Naive thymus-derived CD4-positive, alpha-beta T cell (primary cell): ENCODE measurements at regions of chr6 and their contacts with region 1.

Region 1: DNA sequence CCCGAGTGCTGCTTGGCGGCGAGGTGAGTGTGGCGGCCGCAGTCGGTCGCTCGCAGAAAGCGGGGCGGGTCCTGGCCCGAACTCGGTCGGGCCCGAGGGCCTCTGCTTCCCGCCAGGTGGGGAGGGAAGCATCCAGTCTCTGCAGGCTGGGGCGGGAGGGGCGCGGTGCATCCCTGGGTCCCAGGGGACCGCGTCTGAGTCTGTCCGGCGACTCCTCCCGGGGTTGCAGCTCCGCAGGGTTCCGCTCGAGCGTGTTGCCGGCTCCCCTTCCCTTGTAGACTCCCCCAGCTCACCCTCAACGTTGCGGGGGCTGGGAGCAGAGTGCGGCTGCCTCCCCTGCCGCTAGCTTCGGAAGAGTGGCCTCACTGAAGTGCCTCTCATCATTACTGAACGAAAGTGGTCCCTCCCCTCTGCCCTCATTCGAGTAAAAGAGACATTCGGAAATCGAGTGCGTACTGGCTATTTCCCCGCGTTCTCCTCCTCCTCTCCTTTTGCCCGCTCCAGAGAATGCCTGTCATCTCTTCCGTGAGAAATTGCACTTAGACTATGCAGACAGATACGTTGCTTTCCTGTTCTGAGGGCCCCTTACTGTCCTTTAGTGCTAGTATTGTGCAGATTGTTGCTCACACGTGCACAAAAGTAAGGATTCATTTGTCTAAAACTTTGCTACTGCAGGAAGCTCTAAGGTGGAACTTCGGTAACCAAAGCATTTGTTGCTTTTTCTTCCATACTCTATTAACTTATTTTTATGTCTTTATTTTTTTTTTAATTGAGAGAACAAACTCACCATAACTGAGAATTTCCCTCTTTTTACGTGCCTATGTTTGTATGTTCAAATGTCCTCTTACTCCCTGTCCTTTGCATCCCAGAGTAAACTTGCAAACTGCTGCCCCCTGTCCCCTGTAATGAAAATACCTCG is 751 bp downstream of the MAP3K4 start:
- DNase-seq: peak in 7 of 9 donors; percentile 17 to 65 (median 47)
- ATAC-seq: peak; percentile 63
- H3K4me3 ChIP-seq: peak overlapping the region; percentile 94
- H3K4me3 Mint-ChIP-seq: peak overlapping the region; percentile 90 to 99 (median 93)
- H3K27ac ChIP-seq: peak overlapping the region; percentile 76
- H3K27ac Mint-ChIP-seq: peak overlapping the region; percentile 83 to 97 (median 93)
- H3K4me1 ChIP-seq: peaks cover 9 to 14% of the 10 kb centered on the region in 2 donors
- H3K4me1 Mint-ChIP-seq: peaks cover 19 to 60% (median 45%) of the 10 kb centered on the region in 7 donors
- H3K27me3 ChIP-seq: no peaks in the 10 kb centered on the region
- H3K27me3 Mint-ChIP-seq: peaks cover 0 to 30% (median 0%) of the 10 kb centered on the region in 5 donors

Region 2: DNA sequence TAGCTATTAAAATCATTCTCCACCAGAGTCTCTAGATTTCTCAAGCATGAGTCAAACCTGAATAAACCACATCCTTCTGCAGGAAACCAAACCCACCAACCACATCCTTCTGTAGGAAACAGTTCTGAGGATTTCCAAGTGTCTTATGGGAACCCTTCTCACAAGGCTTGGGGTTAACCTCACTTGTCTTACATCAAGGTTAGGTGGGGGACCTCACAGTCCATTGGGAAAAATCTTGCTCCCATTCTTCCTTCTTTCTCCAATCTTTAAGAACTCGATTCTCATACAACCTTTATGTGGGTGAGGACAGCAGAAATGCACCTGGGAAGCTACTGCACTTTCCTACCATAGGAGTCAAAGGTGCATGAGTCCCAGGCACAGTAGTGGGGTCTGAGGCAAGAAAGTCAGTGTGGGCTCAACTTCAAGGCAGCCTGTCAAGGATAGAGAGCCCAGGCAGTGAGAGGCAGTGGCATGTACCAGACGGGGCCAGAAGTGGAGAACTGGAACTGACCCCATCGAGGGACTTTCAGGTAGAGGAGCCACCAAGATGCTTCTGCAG is 529.7 kb before region 1 on chr6:
- CTCF ChIA-PET with region 1: no interaction called
- POLR2A ChIA-PET with region 1: no interaction called
- intact Hi-C with region 1: loop called in 1 of 2 experiments (anchors 5 kb)
- DNase-seq: peak in 8 of 9 donors; percentile 69 to 93 (median 90)
- ATAC-seq: peak; percentile 95
- H3K4me3 ChIP-seq: peak overlapping the region; percentile 47
- H3K4me3 Mint-ChIP-seq: peak overlapping the region; percentile 60 to 89 (median 72)
- H3K27ac ChIP-seq: no peak overlapping the region
- H3K27ac Mint-ChIP-seq: peak overlapping the region; percentile 53 to 98 (median 88)
- H3K4me1 ChIP-seq: peaks cover 50 to 56% of the 10 kb centered on the region in 2 donors
- H3K4me1 Mint-ChIP-seq: peaks cover 33 to 81% (median 71%) of the 10 kb centered on the region in 7 donors
- H3K27me3 ChIP-seq: no peaks in the 10 kb centered on the region
- H3K27me3 Mint-ChIP-seq: peaks cover 0 to 52% (median 10%) of the 10 kb centered on the region in 5 donors

Region 3: DNA sequence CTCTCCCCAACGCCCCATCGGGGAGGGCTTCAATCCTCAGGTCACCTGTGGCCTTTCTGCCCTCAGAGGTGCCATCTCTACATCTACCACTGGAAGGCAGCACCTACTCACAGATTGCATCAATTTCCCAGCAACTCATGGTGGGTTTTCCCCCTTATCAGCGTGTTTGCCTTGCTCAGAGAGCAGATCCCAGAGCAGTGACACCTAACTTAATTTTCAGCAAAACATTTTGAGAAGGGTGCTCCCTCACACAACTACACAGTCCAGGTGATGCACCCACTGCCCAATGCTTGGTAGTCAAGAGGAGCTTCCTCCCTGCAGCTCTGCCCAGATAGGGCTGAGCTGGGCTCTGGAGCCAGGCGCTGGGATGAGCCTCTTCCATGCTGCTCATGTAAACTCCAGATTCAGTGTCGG is 242.0 kb before region 1 on chr6:
- CTCF ChIA-PET with region 1: no interaction called
- POLR2A ChIA-PET with region 1: no interaction called
- intact Hi-C with region 1: no loop called
- DNase-seq: no peak
- ATAC-seq: no peak
- H3K4me3 ChIP-seq: no peak overlapping the region
- H3K4me3 Mint-ChIP-seq: no peak overlapping the region
- H3K27ac ChIP-seq: no peak overlapping the region
- H3K27ac Mint-ChIP-seq: no peak overlapping the region
- H3K4me1 ChIP-seq: no peaks in the 10 kb centered on the region
- H3K4me1 Mint-ChIP-seq: no peaks in the 10 kb centered on the region
- H3K27me3 ChIP-seq: no peaks in the 10 kb centered on the region
- H3K27me3 Mint-ChIP-seq: peaks cover 3 to 29% (median 13%) of the 10 kb centered on the region in 5 donors

Region 4: DNA sequence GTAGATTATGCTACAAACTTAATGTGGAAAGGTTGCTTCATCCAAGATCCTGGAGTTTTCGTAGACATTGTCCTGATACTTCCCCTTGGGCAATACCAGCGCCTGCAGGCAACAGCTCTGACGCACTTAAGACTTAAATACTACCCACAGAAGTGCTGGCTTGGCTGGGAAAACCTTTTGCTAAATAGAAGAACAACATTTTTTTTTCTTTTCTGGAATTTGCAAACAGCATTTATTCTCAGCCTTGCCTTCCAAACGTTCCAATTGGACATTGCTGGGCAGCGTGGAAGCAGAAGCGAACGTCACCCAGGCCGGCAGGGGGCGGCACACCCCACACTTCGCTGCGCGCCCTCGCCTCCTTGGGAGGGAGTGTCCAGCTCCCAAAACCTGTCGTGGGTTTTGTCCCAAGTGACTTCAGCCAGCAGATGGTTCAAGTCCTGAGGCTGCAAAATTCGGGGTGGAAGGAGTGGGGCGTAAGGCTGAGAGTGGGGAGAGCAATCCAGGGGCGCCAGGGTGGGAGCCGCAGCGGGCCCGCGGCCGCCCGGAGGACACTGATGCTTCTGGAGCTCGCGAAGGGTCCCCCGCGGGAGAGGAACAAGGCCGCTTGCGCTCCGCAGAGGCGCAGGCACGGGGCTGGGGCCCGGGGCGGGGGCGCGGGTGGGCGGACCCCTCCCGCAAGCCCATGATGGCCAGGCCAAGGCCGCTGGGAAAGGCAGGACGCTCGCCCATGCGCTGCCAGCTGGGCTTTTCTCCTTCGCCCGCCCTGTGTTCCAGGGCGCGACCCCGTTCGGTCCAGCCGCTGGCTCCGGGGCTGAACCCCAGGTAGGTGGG is 61.6 kb before region 1 on chr6:
- CTCF ChIA-PET with region 1: interaction called, 4 read pairs
- POLR2A ChIA-PET with region 1: no interaction called
- intact Hi-C with region 1: loop called (anchors 1 kb)
- DNase-seq: peak in 8 of 9 donors; percentile 3 to 69 (median 40)
- ATAC-seq: peak; percentile 72
- H3K4me3 ChIP-seq: no peak overlapping the region
- H3K4me3 Mint-ChIP-seq: peak overlapping the region in 7 of 10 donors; percentile 16 to 62 (median 30)
- H3K27ac ChIP-seq: no peak overlapping the region
- H3K27ac Mint-ChIP-seq: no peak overlapping the region
- H3K4me1 ChIP-seq: no peaks in the 10 kb centered on the region
- H3K4me1 Mint-ChIP-seq: peaks cover 0 to 5% (median 0%) of the 10 kb centered on the region in 7 donors
- H3K27me3 ChIP-seq: peaks cover 0 to 5% of the 10 kb centered on the region in 2 donors
- H3K27me3 Mint-ChIP-seq: peaks cover 32 to 50% (median 47%) of the 10 kb centered on the region in 5 donors

Region 5: GRCh38 chr6:161079566-161080262 is 87.4 kb after region 1 on chr6:
- CTCF ChIA-PET with region 1: no interaction called
- POLR2A ChIA-PET with region 1: no interaction called
- intact Hi-C with region 1: loop called in 1 of 2 experiments (anchors 5 kb)
- DNase-seq: peak in 1 of 9 donors; percentile 57
- ATAC-seq: peak; percentile 27
- H3K4me3 ChIP-seq: no peak overlapping the region
- H3K4me3 Mint-ChIP-seq: peak overlapping the region in 1 of 10 donors; percentile 20
- H3K27ac ChIP-seq: no peak overlapping the region
- H3K27ac Mint-ChIP-seq: peak overlapping the region in 4 of 9 donors; percentile 11 to 70 (median 29)
- H3K4me1 ChIP-seq: peaks cover 10 to 14% of the 10 kb centered on the region in 2 donors
- H3K4me1 Mint-ChIP-seq: peaks cover 0 to 13% (median 1%) of the 10 kb centered on the region in 7 donors
- H3K27me3 ChIP-seq: no peaks in the 10 kb centered on the region
- H3K27me3 Mint-ChIP-seq: no peaks in the 10 kb centered on the region

Region 6: DNA sequence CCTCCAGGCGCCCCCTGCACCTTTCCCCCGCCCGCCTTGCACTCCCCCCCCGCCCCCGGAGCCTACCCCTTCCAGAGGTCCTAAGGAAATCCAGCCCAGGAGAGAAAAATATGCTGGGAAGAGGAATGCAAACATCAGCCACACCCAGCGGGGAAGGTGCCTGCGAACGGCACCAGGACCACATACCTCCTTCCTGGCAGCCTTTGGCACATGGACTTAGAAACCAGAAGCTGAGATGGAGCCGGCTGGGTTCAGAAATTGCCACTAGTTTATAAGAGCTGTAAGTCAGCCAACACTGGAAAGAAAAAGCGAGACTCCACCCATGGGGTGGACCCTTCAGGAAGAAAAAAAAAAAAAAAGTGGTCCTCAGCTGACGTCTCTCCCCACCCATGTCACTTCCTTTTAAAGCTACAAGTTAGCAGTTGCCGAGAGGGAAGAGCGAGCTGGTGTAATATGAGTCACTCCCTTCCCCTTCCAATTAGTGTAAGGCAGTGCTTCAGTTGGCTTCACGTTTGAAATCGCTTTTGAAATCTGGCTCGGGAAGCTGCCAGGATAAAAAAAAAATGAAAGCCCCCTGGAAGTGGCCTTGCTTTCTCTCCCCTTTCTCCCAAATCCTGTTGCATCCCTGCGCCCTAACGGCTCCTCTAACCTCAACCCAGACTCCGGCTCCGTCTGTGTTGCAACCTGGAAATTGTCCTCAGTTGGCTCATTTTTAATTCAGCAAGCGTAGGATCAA is 281.6 kb after region 1 on chr6 and contains the start of gene AGPAT4:
- CTCF ChIA-PET with region 1: no interaction called
- POLR2A ChIA-PET with region 1: no interaction called
- intact Hi-C with region 1: loop called (anchors 1 kb)
- DNase-seq: peak; percentile 31 to 85 (median 78)
- ATAC-seq: peak; percentile 96
- H3K4me3 ChIP-seq: peak within 1 kb of the TSS; percentile 46
- H3K4me3 Mint-ChIP-seq: peak within 1 kb of the TSS; percentile 82 to 98 (median 94)
- H3K27ac ChIP-seq: peak within 1 kb of the TSS; percentile 66
- H3K27ac Mint-ChIP-seq: peak within 1 kb of the TSS; percentile 87 to 98 (median 94)
- H3K4me1 ChIP-seq: peaks cover 0 to 6% of the 10 kb centered on the region in 2 donors
- H3K4me1 Mint-ChIP-seq: peaks cover 10 to 31% (median 19%) of the 10 kb centered on the region in 7 donors
- H3K27me3 ChIP-seq: no peaks in the 10 kb centered on the region
- H3K27me3 Mint-ChIP-seq: peaks cover 0 to 15% (median 0%) of the 10 kb centered on the region in 5 donors
- total RNA-seq, gene AGPAT4: 2.0 to 16.2 (median 4.4) TPM